ENCODE measurements at regions of chr1 and their contacts with region 1.

Region 1: DNA sequence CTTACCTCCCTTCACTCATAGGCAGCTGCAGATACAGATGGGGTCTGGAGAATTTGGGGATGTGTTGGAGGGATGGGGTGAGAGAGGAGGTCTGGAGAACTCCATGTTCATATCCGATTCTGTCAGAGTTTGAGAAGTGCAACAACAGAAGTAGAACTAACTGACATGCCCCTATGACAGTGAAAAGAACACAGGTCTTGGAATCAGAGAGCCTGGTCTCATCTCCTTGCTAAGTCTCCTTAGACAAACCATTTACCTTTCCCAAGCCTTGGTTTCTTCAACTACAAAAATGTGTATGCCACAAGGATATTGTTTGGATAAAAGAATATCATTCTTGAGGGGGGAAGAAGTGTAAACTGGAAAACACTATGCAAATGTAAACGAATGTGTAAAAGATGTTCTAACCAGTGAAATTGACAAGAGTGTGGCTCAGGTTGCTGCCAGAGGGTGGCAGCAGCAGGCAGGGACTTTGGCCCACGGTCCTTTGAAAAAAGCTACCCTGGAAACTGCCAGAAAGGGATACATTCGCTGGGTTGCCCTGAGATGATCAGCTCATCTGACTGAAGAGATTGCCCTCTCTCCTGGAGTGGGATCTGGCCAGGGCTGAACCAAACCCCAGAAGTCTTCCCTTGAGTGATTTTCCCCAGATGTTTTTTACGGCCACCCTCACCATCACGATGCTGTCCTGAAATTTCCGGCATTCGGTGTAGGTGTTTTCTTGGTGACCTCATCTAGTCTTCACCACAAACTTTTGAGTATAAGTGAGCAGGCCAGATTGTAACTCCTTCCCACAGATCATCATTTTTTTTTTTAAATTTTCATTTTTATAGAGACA is 17.0 kb upstream of the CD2 start:
- DNase-seq: peak; percentile 49
- H3K4me3 ChIP-seq: no peak overlapping the region
- H3K27ac ChIP-seq: no peak overlapping the region
- H3K4me1 ChIP-seq: no peaks in the 10 kb centered on the region
- H3K27me3 ChIP-seq: no peaks in the 10 kb centered on the region
- CTCF ChIP-seq: peak; percentile 84 to 90

Region 2: GRCh38 chr1:116817582-116818064 is 80.4 kb after region 1 on chr1:
- CTCF ChIA-PET with region 1: interaction called, 4 read pairs
- dilution Hi-C with region 1: no loop called
- in situ Hi-C with region 1: loop called (anchors 5 to 10 kb)
- intact Hi-C with region 1: loop called (anchors 1 kb)
- DNase-seq: peak; percentile 63
- H3K4me3 ChIP-seq: no peak overlapping the region
- H3K27ac ChIP-seq: no peak overlapping the region
- H3K4me1 ChIP-seq: peaks cover 12% of the 10 kb centered on the region
- H3K27me3 ChIP-seq: no peaks in the 10 kb centered on the region
- CTCF ChIP-seq: peak; percentile 78 to 89

Region 3: DNA sequence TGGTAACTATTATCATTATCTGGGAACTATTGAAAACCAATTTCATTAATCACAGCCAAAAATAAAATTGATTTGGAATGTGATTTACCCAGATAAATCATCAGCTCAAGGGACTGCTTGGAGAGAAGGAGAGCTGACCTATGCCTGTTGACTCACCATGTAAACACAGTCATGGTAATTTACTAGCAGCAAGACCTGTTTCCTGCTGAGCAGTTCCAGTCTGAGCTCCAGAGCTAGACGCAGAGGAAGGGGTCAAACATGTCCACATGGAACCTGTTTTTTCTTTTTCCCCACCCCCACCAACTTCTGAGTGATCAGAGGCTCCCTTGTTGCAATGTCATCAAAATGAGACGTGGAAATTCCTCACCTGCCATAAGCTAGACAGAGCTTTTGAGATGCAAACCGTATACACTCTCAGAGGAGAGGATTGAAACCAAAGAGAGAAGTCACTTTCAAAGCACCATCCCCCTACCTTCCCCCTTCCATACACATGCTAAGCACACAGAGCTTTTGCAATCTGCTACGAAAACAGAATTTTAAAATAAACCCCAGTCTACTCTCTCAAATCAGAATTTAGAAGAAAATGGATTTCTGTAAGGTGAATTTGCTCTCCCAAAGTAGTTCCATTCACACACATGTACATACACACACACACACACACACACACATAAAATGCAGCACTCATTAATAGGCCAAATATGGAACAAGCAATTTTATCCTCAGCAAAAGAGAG is 116.6 kb after region 1 on chr1:
- CTCF ChIA-PET with region 1: interaction called, 10 read pairs
- dilution Hi-C with region 1: no loop called
- in situ Hi-C with region 1: no loop called
- intact Hi-C with region 1: no loop called
- DNase-seq: peak; percentile 83
- H3K4me3 ChIP-seq: no peak overlapping the region
- H3K27ac ChIP-seq: no peak overlapping the region
- H3K4me1 ChIP-seq: peaks cover 31% of the 10 kb centered on the region
- H3K27me3 ChIP-seq: no peaks in the 10 kb centered on the region
- CTCF ChIP-seq: no peak

Region 4: GRCh38 chr1:116881879-116882520 is 144.8 kb after region 1 on chr1:
- CTCF ChIA-PET with region 1: interaction called, 3 read pairs
- dilution Hi-C with region 1: no loop called
- in situ Hi-C with region 1: no loop called
- intact Hi-C with region 1: loop called (anchors 1 kb)
- DNase-seq: peak; percentile 50
- H3K4me3 ChIP-seq: no peak overlapping the region
- H3K27ac ChIP-seq: no peak overlapping the region
- H3K4me1 ChIP-seq: peaks cover 42% of the 10 kb centered on the region
- H3K27me3 ChIP-seq: no peaks in the 10 kb centered on the region
- CTCF ChIP-seq: peak; percentile 25 to 65

Region 5: DNA sequence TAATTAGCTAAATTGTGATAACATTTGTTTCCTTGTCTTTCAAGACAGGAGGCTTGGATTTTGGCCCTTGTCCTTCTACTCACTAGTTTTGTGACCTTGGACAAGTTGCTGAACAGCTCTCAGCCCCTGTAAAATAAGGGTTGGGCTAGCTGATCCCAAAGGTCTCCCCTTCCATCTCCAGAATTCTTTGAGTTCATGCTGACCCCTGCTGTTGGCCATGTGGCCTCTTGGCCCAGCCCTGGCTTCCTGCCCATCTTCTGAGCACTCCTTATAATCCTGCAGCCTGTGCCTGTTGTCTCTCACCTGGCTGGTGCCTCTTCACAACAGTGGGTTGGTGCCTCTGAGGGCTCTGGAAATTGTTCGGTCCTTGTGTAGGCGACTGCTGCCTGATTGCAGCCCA is 182.6 kb after region 1 on chr1:
- CTCF ChIA-PET with region 1: no interaction called
- dilution Hi-C with region 1: no loop called
- in situ Hi-C with region 1: no loop called
- intact Hi-C with region 1: loop called (anchors 5 kb)
- DNase-seq: no peak
- H3K4me3 ChIP-seq: no peak overlapping the region
- H3K27ac ChIP-seq: peak overlapping the region; percentile 42
- H3K4me1 ChIP-seq: peaks cover 65% of the 10 kb centered on the region
- H3K27me3 ChIP-seq: no peaks in the 10 kb centered on the region
- CTCF ChIP-seq: no peak

Region 6: DNA sequence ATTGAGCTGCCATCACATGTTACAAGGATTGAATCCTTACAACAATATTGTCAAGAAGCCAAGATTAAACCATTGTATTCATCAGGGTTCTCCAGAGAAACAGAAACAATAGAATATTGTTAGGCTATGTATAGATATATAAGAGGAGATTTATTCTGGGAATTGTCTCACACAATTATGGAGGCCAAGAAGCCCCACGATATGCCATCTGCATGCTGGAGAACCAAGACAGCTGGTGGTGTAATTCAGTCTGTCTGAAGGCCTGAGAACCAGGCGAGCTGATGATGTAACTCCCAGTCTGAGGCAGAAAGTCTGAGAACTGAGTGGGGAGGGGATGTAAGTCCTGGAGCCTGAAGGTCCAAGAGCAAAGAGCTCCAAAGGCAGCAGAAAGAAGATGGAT is 308.4 kb after region 1 on chr1:
- CTCF ChIA-PET with region 1: no interaction called
- dilution Hi-C with region 1: loop called (anchors 25 kb)
- in situ Hi-C with region 1: loop called (anchors 5 kb)
- intact Hi-C with region 1: no loop called
- DNase-seq: no peak
- H3K4me3 ChIP-seq: no peak overlapping the region
- H3K27ac ChIP-seq: no peak overlapping the region
- H3K4me1 ChIP-seq: no peaks in the 10 kb centered on the region
- H3K27me3 ChIP-seq: no peaks in the 10 kb centered on the region
- CTCF ChIP-seq: no peak

Region 7: DNA sequence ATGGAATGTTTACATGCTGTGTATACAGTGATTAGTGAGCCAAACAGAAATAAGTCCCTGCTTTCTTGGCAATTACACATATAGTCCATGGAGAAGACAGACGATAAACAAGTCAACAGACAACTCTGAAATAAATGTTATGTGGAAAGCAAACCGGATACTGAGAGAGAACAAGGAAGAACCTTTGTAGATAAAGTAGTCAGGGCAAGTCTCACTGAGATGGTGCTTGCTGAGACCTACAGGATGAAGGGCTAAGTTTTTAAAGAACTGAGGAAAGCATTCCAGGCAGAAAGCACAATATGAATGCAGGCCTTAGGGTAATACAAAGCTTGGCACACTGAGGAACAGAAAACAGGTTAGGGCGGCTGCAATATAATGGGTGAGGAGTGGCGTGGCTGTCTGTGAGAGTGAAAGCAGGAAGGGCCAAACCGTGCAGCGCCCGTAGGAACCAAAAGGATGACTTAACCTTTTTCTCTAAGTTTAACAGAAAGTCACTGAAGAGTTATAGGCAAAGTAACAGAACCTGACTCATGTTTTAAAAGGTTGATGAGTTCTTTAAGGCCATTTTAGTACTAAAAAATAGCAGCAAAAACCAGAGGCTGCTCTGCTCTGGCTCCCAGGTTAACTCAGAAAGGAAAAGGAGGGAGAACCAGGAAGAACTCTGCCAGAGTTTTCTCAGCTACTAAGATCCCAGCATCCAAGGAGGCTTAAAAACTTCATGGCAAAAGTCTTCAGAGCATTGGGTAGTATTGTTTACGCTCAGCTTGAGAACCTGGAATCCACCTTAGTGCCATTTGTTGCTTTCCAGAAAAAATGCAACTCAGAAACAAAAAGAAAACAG is 314.2 kb after region 1 on chr1:
- CTCF ChIA-PET with region 1: no interaction called
- dilution Hi-C with region 1: loop called (anchors 25 kb)
- in situ Hi-C with region 1: loop called (anchors 5 kb)
- intact Hi-C with region 1: loop called (anchors 1 kb)
- DNase-seq: peak; percentile 46
- H3K4me3 ChIP-seq: peak overlapping the region in 2 of 3 experiments; percentile 19 to 25
- H3K27ac ChIP-seq: peak overlapping the region; percentile 43
- H3K4me1 ChIP-seq: peaks cover 5% of the 10 kb centered on the region
- H3K27me3 ChIP-seq: no peaks in the 10 kb centered on the region
- CTCF ChIP-seq: no peak

Region 8: DNA sequence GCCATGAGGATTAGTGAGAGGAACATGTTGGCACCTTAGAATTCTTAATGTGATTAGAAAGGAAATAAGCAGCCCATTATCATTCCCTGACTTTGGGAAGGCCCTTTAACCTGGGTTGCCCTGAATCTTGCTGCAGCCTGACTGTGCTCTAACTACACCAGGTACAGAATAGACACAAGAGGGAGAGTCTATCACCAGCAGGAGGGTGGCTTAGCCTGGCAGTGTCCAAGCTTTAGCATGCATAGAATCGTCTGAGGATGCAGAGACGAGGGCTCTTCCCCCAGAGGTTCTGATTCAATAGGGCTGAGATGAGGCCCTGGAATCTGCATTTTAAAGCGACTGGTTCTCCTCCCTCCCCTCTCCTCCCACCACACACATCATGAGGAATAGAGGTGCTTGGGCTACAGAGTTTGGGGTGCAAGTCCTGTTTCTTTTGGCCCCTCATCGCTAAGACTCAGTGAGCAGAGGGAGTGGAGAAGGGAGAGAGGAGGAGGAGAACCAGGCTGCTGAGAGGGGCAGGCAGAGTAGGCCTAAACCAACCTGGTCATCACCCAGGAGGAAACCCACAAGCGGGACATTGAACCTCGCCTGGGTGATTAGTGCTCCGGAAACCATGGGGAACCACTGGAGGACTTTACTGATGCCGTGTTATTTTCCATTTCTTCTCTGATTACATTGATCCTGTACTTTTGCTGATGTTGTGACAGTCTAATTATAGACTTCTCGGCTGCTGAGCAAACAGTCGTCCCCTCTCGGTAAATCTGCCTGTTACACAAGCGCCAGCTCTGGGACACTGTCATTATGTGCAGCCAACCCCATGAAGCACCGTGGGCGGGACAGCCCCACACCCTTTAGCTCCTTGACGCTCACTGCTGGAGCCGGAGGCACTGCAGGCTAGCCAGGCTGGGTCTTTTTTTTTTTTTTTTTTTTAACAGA is 862.3 kb after region 1 on chr1:
- CTCF ChIA-PET with region 1: no interaction called
- dilution Hi-C with region 1: no loop called
- in situ Hi-C with region 1: no loop called
- intact Hi-C with region 1: no loop called
- DNase-seq: no peak
- H3K4me3 ChIP-seq: no peak overlapping the region
- H3K27ac ChIP-seq: no peak overlapping the region
- H3K4me1 ChIP-seq: no peaks in the 10 kb centered on the region
- H3K27me3 ChIP-seq: peaks cover 5% of the 10 kb centered on the region
- CTCF ChIP-seq: no peak